ENCODE measurements at regions of chr2 and their contacts with region 1.

Region 1: GRCh38 chr2:190718652-190719526 is 70.0 kb downstream of the NAB1 start:
- DNase-seq: peak; percentile 91
- H3K4me3 Mint-ChIP-seq: peak overlapping the region; percentile 62
- H3K27ac Mint-ChIP-seq: peak overlapping the region; percentile 97
- H3K4me1 Mint-ChIP-seq: peaks cover 84% of the 10 kb centered on the region
- H3K27me3 Mint-ChIP-seq: no peaks in the 10 kb centered on the region

Region 2: DNA sequence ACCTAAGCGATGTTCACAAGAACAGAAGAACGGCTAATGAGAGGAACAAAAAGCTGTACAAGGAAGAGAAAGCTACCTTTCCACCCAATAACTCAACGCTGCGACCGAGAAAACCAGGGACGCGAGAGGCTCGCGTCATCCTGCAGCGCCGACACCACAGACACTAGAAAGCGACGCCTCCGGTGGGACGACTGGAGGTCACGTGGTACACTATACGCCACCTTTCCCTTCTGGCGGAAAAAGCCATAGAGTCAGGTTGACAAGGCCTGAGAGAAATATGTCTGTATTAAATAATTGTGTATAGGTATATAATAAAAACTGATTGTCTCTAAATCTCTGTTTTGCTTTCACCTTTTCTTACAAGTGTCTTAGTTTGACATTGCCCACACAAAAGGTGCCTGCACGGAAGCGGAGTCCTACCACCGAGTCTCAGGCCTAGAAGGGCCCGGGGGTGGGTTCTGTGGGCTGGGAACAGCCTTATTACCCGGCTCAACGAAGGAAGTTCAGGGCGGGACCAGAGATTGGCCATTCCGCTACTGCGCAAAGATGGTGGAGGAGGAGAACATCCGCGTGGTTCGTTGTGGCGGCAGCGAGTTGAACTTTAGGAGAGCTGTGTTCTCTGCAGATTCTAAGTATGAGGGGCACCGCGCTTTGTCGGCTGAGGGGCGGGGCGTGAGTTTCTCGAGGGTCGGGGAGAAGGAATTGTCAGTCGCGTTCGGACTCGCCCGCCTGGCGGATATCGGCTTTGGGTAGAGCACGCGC is 1277.8 kb before region 1 on chr2 and contains the start of gene WDR75:
- CTCF ChIA-PET with region 1: no interaction called
- POLR2A ChIA-PET with region 1: no interaction called
- intact Hi-C with region 1: loop called (anchors 5 kb)
- DNase-seq: peak; percentile 94
- H3K4me3 Mint-ChIP-seq: no peak within 1 kb of the TSS
- H3K27ac Mint-ChIP-seq: peak within 1 kb of the TSS; percentile 99
- H3K4me1 Mint-ChIP-seq: peaks cover 11% of the 10 kb centered on the region
- H3K27me3 Mint-ChIP-seq: no peaks in the 10 kb centered on the region
- total RNA-seq, gene WDR75: 66.4 to 68.8 TPM

Region 3: GRCh38 chr2:190158798-190159434 is 560.0 kb before region 1 on chr2:
- CTCF ChIA-PET with region 1: no interaction called
- POLR2A ChIA-PET with region 1: no interaction called
- intact Hi-C with region 1: no loop called
- DNase-seq: no peak
- H3K4me3 Mint-ChIP-seq: no peak overlapping the region
- H3K27ac Mint-ChIP-seq: no peak overlapping the region
- H3K4me1 Mint-ChIP-seq: no peaks in the 10 kb centered on the region
- H3K27me3 Mint-ChIP-seq: no peaks in the 10 kb centered on the region

Region 4: GRCh38 chr2:190534310-190535120 is 184.4 kb before region 1 on chr2 and contains the start of gene NEMP2:
- CTCF ChIA-PET with region 1: interaction called, 3 read pairs
- POLR2A ChIA-PET with region 1: interaction called, 3 read pairs
- intact Hi-C with region 1: loop called (anchors 2 kb)
- DNase-seq: peak; percentile 86
- H3K4me3 Mint-ChIP-seq: peak within 1 kb of the TSS; percentile 95
- H3K27ac Mint-ChIP-seq: peak within 1 kb of the TSS; percentile 99
- H3K4me1 Mint-ChIP-seq: peaks cover 57% of the 10 kb centered on the region
- H3K27me3 Mint-ChIP-seq: no peaks in the 10 kb centered on the region
- total RNA-seq, gene NEMP2: 28.8 to 30.0 TPM

Region 5: DNA sequence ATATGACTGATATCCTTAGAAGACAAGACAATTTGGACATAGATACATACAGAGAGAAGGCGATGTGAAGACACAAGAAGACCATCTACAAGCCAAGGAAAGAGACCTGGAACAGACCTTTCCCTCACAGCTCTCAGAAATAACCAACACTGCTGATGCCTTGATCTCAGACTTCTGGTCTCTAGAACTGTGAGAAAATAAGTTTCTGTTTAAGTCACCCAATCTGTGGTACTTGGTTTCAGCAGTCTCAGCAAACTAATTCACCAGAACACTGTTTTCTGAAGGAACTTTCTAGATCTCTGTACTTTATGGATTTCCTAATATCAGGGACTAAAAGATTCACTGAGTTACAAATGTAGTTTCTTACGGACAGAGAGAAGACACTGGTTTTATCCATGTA is 11.2 kb before region 1 on chr2:
- CTCF ChIA-PET with region 1: interaction called, 3 read pairs
- POLR2A ChIA-PET with region 1: interaction called, 5 read pairs
- intact Hi-C with region 1: loop called (anchors 1 kb)
- DNase-seq: no peak
- H3K4me3 Mint-ChIP-seq: no peak overlapping the region
- H3K27ac Mint-ChIP-seq: peak overlapping the region; percentile 50
- H3K4me1 Mint-ChIP-seq: peaks cover 41% of the 10 kb centered on the region
- H3K27me3 Mint-ChIP-seq: no peaks in the 10 kb centered on the region

Region 6: GRCh38 chr2:190843874-190844699 is 125.2 kb after region 1 on chr2:
- CTCF ChIA-PET with region 1: no interaction called
- POLR2A ChIA-PET with region 1: interaction called, 3 read pairs
- intact Hi-C with region 1: loop called (anchors 1 kb)
- DNase-seq: peak; percentile 78
- H3K4me3 Mint-ChIP-seq: peak overlapping the region; percentile 30
- H3K27ac Mint-ChIP-seq: peak overlapping the region; percentile 92
- H3K4me1 Mint-ChIP-seq: peaks cover 39% of the 10 kb centered on the region
- H3K27me3 Mint-ChIP-seq: peaks cover 1% of the 10 kb centered on the region

Region 7: DNA sequence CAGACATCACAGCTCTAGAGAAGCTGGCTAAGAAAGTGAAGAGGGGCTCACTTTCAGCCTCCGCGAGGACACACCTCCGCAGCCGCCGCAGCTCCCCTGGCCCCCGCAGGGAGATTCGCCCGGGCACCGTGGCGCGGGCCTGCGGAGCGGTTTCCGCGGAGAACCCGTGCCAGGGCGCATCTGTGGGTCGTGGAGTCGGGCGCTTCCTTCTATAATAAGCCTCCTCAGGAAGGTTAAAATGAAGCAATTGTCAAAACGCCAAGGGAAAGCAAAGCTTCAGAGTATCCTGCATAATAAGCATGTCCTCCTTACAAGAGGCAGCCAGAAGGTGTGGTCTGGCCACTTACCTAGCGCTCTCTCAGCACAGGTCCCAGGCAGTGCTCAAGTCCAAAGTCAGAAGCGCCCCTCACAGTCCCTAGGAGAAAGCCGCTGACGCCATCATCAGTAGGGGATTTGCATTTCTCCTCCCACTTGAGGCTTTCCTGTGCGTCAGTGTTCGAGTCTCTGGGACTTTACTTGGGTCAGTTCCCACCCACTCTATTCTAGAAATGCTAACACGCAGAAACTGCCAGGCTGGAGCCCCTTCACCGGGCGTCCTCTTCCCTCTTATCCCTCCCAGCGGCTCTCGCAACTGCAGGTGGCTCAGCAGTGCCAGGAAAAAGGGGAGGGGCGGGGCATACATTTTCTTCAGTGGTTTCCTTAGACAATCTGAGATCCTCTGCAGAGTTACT is 431.9 kb after region 1 on chr2 and contains the start of gene STAT4:
- CTCF ChIA-PET with region 1: no interaction called
- POLR2A ChIA-PET with region 1: no interaction called
- intact Hi-C with region 1: loop called (anchors 2 kb)
- DNase-seq: peak; percentile 93
- H3K4me3 Mint-ChIP-seq: peak within 1 kb of the TSS; percentile 96
- H3K27ac Mint-ChIP-seq: peak within 1 kb of the TSS; percentile 95
- H3K4me1 Mint-ChIP-seq: peaks cover 64% of the 10 kb centered on the region
- H3K27me3 Mint-ChIP-seq: no peaks in the 10 kb centered on the region
- total RNA-seq, gene STAT4: 52.4 to 52.6 TPM

Measured in activated CD4-positive, alpha-beta memory T cell treated with anti-CD3 and anti-CD28 coated beads for 36 hours (primary cell).